Right ventricle myocardium superior (tissue), 1 donor: ENCODE measurements at regions of chr16 and their contacts with region 1.

Region 1: GRCh38 chr16:69123910-69124309 is 8.5 kb downstream of the CHTF8 start:
- DNase-seq: no peak
- ATAC-seq: peak; percentile 61

Region 2: GRCh38 chr16:68528686-68529379 is 595.1 kb before region 1 on chr16:
- intact Hi-C with region 1: loop called (anchors 10 kb)
- DNase-seq: peak; percentile 89
- ATAC-seq: peak; percentile 96

Region 3: DNA sequence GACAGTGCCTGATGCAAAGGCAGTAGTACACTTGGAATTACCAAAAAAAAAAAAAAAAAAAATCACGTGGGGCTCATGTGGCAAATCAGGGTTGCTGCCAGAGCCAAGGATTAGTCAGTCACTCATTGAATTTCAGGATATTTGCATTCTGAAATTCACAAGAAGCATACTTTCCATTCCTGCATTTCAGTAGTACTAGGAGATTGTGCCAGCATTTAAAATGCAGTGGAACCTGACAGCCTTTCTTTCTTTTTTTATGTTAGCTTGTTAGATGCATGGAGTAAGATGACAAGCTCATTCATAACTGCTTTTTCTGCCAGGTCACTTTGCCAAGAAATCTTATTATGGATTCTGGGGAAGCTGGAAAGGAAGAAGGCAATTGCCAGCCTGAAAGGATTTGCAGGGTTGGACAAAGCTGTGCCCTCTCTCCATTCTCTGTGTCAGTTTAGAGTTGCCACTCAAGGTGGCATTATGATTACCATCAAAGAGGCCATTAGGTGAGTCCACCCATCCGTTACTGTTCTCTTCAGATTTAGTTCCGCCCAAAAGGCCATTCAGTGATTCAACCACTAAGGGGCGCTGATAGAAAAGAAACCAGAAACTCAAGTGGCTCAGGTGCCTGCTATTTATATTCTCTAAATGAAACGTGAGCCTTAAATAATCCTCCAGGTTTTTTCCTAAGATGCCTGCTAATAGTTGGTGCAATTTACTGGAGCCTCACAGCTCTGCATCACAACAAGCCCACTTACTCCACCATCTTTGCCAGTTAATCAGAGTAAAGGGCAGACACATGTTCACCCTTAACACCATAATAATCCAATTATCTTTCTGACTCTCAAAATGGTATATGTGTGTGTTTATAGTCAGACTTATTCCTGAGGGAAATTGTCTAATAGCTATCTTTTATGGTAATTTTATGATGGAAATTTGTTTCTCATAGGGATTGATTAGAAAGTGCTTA is 221.6 kb before region 1 on chr16:
- intact Hi-C with region 1: loop called (anchors 5 kb)
- DNase-seq: no peak
- ATAC-seq: peak; percentile 48

Region 4: DNA sequence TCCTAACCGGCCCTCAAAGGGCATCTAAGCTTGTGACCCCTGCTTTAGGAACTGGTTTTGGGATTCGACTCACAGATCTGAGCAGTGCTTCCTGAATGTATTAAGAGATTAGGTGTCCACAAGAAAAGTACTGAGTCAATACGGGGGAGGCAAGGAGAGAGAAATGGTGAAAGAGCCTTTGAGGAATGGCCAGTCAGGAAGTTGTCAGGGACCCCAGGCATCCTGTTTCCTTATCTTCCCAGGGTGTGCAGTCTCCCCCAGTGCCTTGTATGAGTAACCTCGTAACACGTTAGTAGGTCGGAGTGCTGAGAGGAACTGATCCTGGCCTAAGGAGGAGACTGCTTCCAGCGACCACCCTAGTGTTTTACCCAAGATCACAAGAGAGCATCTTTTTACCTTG is 244.1 kb after region 1 on chr16:
- intact Hi-C with region 1: no loop called
- DNase-seq: no peak
- ATAC-seq: no peak